ENCODE measurements at regions of chr14 and their contacts with region 1.

Region 1: GRCh38 chr14:77301103-77301502 is 19.6 kb downstream of the POMT2 start:
- DNase-seq: peak; percentile 77 to 91 (median 86)
- ATAC-seq: peak; percentile 65 to 70
- H3K4me3 ChIP-seq: no peak overlapping the region
- H3K27ac ChIP-seq: no peak overlapping the region
- H3K4me1 ChIP-seq: no peaks in the 10 kb centered on the region
- H3K27me3 ChIP-seq: no peaks in the 10 kb centered on the region

Region 2: GRCh38 chr14:77554207-77554606 is 253.1 kb after region 1 on chr14:
- intact Hi-C with region 1: loop called in 1 of 4 experiments (anchors 5 kb)
- DNase-seq: no peak
- ATAC-seq: peak; percentile 42 to 46
- H3K4me3 ChIP-seq: no peak overlapping the region
- H3K27ac ChIP-seq: no peak overlapping the region
- H3K4me1 ChIP-seq: no peaks in the 10 kb centered on the region
- H3K27me3 ChIP-seq: no peaks in the 10 kb centered on the region